GM12878 (cell line): ENCODE measurements at regions of chr3 and their contacts with region 1.

Region 1: DNA sequence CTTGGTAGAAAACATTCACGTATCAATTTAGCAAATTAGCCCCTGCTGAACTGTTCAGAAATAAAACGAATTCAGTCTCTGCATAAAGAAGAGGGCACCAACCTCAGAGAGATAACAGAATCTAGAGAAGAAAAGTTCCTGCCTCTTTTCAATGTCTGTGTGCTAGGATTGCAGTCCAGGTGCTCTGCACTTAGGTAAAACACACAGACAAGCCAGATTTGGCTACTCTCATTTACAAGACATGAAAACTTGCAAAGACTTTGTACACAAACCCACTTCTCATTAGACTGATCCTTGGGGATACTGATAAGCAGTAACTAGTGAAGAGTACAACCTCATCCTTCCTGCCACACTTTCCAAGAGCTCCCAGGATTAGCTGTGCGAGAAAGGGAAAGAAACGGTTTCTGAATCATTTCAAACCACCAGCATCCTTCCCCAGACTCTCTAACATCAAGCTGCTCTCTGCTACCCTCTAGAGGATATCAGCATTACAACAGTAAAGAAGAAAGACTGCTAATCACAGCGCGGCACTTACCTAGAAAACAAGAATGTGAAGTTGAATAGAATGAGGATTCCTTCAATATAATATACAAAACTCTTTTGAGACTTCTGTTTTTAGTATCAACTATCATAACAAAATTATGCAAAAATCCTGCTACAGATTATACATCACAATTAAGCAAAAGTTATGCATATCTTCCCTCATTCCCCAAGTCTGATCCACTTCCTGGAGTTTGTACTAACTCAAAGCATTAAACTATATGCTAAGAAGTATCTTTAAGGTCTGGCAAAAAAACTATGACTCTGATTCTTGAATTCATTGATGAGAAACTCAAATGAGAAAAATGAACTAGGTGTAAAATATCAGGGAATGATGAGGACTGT is 306.4 kb downstream of the MAGI1 start:
- DNase-seq: peak; percentile 3
- ATAC-seq: peak; percentile 93
- H3K4me3 ChIP-seq: no peak overlapping the region
- H3K27ac ChIP-seq: no peak overlapping the region
- H3K4me1 ChIP-seq: no peaks in the 10 kb centered on the region
- H3K27me3 ChIP-seq: no peaks in the 10 kb centered on the region
- CTCF ChIP-seq: peak; percentile 67 to 83 (median 82)
- EP300 ChIP-seq: no peak
- POLR2A ChIP-seq: no peak
- RAD21 ChIP-seq: peak; percentile 64

Region 2: DNA sequence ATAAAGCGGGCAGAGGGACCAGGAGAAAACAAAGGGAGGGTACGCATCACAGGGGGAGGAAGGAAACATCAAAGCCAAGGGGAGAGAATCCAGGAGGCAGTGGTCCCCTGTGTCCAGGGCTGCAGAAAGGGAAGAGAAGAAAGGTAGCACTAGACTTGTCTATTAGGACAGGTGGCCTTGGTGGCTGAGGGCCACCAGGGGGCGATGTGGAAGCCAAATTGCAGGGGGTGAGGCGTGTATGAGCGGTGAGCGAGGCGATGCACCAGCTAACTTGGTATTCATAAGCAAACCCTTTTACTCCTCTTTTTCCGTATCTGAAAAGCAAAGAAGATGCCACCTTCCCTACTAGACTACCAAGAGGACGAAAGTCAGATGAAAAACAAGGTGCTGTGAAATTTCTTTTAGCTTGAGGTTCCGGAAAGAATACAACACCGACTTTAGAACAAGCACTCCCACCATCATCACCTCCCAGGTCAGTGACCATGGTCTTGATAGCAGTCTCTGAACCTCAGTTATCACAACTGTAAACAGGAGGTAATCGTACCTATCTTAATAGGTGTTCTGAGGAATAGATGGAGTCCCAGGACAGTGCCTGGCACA is 390.1 kb before region 1 on chr3:
- CTCF ChIA-PET with region 1: interaction called, 4 read pairs
- POLR2A ChIA-PET with region 1: no interaction called
- RAD21 ChIA-PET with region 1: no interaction called
- SMC1A ChIA-PET with region 1: no interaction called
- in situ Hi-C with region 1: no loop called
- intact Hi-C with region 1: loop called (anchors 5 kb)
- DNase-seq: no peak
- ATAC-seq: peak; percentile 92
- H3K4me3 ChIP-seq: no peak overlapping the region
- H3K27ac ChIP-seq: no peak overlapping the region
- H3K4me1 ChIP-seq: no peaks in the 10 kb centered on the region
- H3K27me3 ChIP-seq: no peaks in the 10 kb centered on the region
- CTCF ChIP-seq: peak; percentile 59 to 75 (median 63)
- EP300 ChIP-seq: no peak
- POLR2A ChIP-seq: no peak
- RAD21 ChIP-seq: peak; percentile 36; the same call in 1 of the 2 replicates

Region 3: GRCh38 chr3:65439641-65440284 is 292.5 kb before region 1 on chr3:
- CTCF ChIA-PET with region 1: no interaction called
- POLR2A ChIA-PET with region 1: no interaction called
- RAD21 ChIA-PET with region 1: no interaction called
- SMC1A ChIA-PET with region 1: no interaction called
- in situ Hi-C with region 1: no loop called
- intact Hi-C with region 1: loop called (anchors 5 kb)
- DNase-seq: no peak
- ATAC-seq: peak; percentile 76
- H3K4me3 ChIP-seq: no peak overlapping the region
- H3K27ac ChIP-seq: no peak overlapping the region
- H3K4me1 ChIP-seq: no peaks in the 10 kb centered on the region
- H3K27me3 ChIP-seq: no peaks in the 10 kb centered on the region
- CTCF ChIP-seq: peak in 1 of 3 experiments; percentile 21; a peak in 1 of 6 replicates
- EP300 ChIP-seq: no peak
- POLR2A ChIP-seq: no peak
- RAD21 ChIP-seq: 0 out of 2 replicates have a peak, but pooled peaks have one; percentile 14